GM10248 (cell line): ENCODE measurements at regions of chr14 and their contacts with region 1.

Region 1: GRCh38 chr14:67359775-67360648 is at the starts of genes ATP6V1D and EIF2S1:
- DNase-seq: peak; percentile 99
- CTCF ChIP-seq: peak; percentile 97

Region 2: GRCh38 chr14:67373347-67373746 is 13.3 kb after region 1 on chr14:
- CTCF ChIA-PET with region 1: interaction called, 15 read pairs
- POLR2A ChIA-PET with region 1: interaction called, 7 read pairs
- DNase-seq: peak; percentile 34
- CTCF ChIP-seq: no peak